ENCODE measurements at regions of chr22 and their contacts with region 1.

Region 1: DNA sequence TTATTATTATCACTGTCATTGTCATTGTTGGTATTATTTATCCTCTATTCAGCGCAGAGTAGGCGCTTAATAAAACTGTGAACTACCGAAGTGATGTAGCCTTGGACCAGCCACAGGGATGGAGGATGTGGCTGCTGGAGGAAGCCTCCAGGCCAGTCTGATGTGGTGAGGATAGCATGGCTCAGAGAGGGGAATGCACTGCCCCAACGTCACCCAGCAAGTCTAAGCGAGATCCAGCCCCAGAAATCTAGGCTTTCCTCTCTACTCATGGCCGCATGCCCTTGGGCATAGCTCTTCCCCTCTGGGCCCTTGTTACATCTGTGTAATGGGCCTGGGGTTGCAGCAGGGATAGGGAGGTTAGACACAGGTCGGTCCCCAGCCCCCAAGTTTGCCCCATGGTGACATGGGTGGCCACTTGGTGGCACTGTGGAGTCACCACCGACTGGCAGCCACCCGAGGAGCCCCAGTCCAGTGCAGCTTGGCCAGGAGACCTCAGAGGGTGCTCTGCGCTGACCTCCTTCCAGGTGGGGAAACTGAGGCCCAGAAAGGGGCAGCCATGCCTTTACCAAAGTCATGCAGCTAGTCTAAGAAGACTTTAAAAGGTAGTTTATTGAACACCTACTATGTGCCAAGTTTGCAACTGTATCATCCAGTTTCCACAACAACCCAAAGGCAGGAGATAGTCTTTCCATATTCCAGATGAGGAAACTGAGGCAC is 395.7 kb downstream of the MN1 start:
- DNase-seq: peak; percentile 45 to 54
- H3K4me3 ChIP-seq: no peak overlapping the region
- H3K27ac ChIP-seq: no peak overlapping the region
- H3K4me1 ChIP-seq: no peaks in the 10 kb centered on the region
- H3K27me3 ChIP-seq: no peaks in the 10 kb centered on the region
- CTCF ChIP-seq: peak in 5 of 6 experiments; percentile 39 to 67 (median 55)
- POLR2A ChIP-seq: no peak

Region 2: DNA sequence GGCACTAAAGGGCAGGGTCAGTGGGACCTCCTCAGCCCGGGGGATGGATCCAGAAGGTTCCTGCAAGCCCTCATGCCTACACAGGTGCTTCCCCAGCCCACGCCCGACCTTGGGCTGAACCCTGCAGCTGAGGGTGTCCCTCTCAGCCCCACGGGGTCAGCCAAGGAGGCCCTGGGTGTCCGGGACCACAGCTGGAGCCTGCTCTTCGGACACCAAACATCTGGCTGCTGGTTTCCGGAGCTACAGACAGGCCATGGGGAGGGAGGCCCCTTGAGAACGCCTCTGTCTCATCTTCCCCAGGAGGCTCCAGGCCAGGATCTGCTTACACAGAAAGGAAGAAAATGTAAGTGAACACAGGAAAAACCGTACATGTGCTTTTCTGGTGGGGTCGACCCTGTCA is 40.1 kb after region 1 on chr22:
- intact Hi-C with region 1: no loop called
- DNase-seq: no peak
- H3K4me3 ChIP-seq: no peak overlapping the region
- H3K27ac ChIP-seq: no peak overlapping the region
- H3K4me1 ChIP-seq: no peaks in the 10 kb centered on the region
- H3K27me3 ChIP-seq: no peaks in the 10 kb centered on the region
- CTCF ChIP-seq: no peak
- POLR2A ChIP-seq: no peak

Region 3: DNA sequence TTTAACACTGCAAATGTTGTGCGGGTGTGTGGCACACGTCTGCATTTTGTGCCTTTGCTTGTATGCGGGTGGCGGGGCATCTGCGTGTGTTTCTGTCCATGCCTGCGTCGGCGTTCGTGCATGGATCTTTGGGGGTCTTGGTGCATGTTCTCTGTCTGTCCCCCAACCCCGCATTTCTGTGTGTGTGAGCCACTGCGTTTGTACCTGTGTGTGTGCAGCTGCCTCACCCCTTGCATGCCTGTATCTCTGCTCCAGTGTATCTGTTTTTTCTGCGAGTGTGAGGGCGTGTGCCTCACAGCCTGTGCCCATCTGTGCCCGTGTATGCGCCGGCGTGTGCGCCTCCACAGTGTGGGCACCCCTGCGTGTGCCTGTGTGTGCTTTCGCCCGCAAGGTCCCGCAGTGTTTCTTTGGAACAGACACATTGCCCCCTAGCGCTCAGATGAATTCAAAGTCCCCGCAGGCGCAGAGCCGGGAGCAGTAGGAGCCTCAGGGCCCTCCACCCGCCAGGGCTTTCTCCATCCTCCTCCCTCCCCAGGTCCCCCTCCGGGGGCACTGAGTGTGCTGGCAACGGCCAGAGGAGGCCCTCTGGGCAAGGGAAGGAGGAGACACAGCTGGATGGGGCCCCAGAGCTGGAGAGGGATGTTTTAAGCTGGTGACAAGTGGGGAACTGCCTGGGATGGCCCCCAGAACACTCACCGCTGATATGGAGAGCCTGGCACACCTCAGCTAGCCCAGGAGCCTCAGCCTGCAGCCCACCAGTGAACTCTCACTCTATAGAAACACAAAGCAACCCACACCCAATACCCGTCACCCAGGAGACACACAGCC is 398.9 kb after region 1 on chr22:
- intact Hi-C with region 1: loop called (anchors 5 kb)
- DNase-seq: peak; percentile 58 to 67
- H3K4me3 ChIP-seq: no peak overlapping the region
- H3K27ac ChIP-seq: no peak overlapping the region
- H3K4me1 ChIP-seq: peaks cover 13 to 20% of the 10 kb centered on the region in 2 donors
- H3K27me3 ChIP-seq: no peaks in the 10 kb centered on the region
- CTCF ChIP-seq: peak in 5 of 6 experiments; percentile 50 to 69 (median 59)
- POLR2A ChIP-seq: no peak

Measured in thyroid gland (tissue), 4 donors.